HEK293 (cell line): ENCODE measurements at regions of chr2 and their contacts with region 1.

Region 1: DNA sequence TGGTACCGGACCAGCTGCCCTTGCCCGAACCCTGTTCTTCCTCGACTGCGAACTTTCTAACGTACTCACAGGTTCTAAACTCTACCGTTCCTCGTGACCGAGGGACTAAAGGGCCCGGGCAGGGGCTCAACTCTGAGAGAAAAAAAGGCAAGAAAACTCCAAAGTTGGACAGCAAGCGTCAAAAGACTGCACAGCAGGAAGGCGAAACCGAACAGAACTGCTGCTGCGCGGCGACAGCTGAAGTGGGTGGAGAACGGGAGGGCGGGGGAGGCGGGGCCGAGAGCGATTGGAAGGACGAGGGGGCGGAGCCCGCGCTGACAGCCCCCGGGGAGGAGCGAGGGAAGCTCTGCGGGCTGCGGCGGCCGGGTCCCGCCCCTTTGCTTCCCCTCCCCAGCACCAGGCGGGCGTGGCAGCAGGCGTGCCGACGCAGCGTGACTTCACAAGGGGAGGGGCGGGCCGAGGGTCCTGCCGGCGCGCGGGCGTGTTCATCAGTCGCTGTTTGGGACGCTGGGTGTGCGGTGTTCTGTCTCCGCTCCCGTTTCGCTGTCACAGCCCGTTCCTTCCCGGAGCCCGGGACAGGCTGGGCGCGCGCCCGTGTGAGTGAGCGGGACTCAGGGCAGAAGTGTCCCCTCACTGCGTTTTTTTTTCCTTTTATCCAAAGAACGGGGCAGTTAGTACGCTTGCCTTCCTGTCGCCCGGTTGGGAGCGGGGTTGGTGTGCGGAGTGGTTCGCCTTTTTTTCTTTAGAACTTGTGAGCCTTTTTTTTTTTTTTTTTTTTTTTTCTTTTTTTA is at the start of gene NABP1:
- H3K4me3 ChIP-seq: peak within 1 kb of the TSS; percentile 70
- H3K27ac ChIP-seq: peak within 1 kb of the TSS; percentile 71
- H3K4me1 ChIP-seq: peaks cover 6% of the 10 kb centered on the region; the same call in 1 of the 2 replicates
- CTCF ChIP-seq: 0 out of 2 replicates have a peak, but pooled peaks have one; percentile 7

Region 2: GRCh38 chr2:191539068-191539467 is 138.8 kb before region 1 on chr2:
- CTCF ChIA-PET with region 1: no interaction called
- POLR2A ChIA-PET with region 1: no interaction called
- H3K4me3 ChIP-seq: no peak overlapping the region
- H3K27ac ChIP-seq: no peak overlapping the region
- H3K4me1 ChIP-seq: no peaks in the 10 kb centered on the region
- CTCF ChIP-seq: no peak

Region 3: DNA sequence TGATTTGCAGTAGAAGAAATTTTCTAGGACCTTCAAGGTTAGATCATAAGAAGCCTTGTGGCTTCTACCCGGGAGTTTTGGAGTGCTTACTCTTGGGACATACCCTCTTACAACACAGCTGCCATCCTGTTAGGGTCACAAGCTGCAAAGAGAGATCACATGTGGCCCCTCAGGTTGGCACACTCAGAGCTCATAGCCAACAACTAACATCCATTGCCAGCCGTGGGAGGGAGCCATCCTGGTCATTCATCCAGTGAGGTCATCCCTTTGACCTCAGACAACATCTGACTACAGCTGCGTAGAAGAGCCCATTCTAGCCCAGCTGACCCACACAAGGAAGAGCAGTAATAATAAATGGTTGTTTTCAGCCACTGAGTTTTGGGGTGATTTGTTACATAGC is 76.8 kb before region 1 on chr2:
- CTCF ChIA-PET with region 1: no interaction called
- POLR2A ChIA-PET with region 1: no interaction called
- H3K4me3 ChIP-seq: no peak overlapping the region
- H3K27ac ChIP-seq: no peak overlapping the region
- H3K4me1 ChIP-seq: no peaks in the 10 kb centered on the region
- CTCF ChIP-seq: no peak

Region 4: GRCh38 chr2:191614764-191615163 is 63.1 kb before region 1 on chr2:
- CTCF ChIA-PET with region 1: no interaction called
- POLR2A ChIA-PET with region 1: interaction called, 10 read pairs
- H3K4me3 ChIP-seq: no peak overlapping the region
- H3K27ac ChIP-seq: no peak overlapping the region
- H3K4me1 ChIP-seq: no peaks in the 10 kb centered on the region
- CTCF ChIP-seq: no peak

Region 5: DNA sequence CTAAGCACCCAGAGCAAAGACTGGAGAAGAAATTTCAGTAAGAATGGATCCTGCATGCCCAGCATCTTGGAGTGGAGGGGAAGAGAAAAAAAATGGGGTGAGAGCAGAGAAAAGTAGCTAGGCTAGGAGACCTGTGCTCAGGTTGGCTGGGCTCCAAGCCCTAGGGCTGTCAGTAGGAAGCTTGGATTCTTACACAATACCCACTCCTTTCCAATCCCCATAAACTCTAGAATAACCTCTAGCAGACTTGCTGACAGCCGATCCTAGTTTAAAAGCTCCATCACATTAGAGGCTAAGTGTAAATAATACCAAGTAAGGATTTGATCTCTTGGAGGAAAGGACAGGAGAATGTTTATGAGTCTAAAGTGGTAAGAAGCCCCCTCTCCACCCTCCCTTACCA is 46.1 kb before region 1 on chr2:
- CTCF ChIA-PET with region 1: no interaction called
- POLR2A ChIA-PET with region 1: interaction called, 21 read pairs
- H3K4me3 ChIP-seq: no peak overlapping the region
- H3K27ac ChIP-seq: peak overlapping the region; percentile 48
- H3K4me1 ChIP-seq: peaks cover 10% of the 10 kb centered on the region; the same call in 1 of the 2 replicates
- CTCF ChIP-seq: no peak

Region 6: DNA sequence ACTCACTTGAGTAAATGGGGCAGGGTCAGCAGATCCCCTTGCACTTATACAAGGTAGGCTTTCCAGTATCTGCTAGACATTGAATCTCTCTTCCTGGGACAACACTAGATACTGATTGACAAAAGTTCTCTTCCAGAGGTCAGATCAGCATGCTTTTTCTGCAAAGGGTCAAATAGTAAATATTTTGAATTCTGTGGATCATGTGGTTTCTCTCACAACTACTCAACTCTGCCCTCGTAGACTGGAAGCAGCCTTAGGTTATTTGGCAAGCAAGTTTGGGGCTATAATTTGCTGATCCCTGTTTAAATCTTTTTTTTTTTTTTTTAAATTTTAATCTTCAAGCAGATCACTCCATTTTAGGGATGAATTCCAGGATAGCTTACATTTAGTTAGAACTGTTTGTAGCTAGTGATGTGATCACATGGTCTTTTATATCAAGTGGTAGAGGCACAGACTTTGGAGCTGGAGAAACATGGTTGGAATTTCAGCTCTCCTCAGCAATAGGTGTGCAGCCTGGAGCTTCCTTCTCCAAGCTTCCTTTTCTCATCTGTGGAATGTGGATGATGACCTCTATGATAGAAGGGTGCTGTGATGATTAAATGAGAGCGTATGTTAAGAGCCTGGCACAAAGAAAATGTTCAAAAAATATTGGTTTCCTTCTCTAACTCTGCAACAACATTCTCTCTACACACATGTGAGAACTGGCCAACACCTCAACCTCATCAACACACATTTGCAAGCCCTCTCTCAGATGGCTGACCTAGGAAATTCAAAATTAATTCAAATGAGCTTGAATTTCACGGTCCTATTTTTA is 17.1 kb before region 1 on chr2:
- CTCF ChIA-PET with region 1: interaction called, 3 read pairs
- POLR2A ChIA-PET with region 1: interaction called, 11 read pairs
- H3K4me3 ChIP-seq: no peak overlapping the region
- H3K27ac ChIP-seq: no peak overlapping the region
- H3K4me1 ChIP-seq: no peaks in the 10 kb centered on the region
- CTCF ChIP-seq: no peak